ENCODE measurements at regions of chr2 and their contacts with region 1.

Region 1: GRCh38 chr2:20015472-20016083 is 3.1 kb upstream of the MATN3 start:
- DNase-seq: peak in 1 of 7 donors; percentile 25
- H3K4me3 ChIP-seq: no peak overlapping the region
- H3K27ac ChIP-seq: no peak overlapping the region
- H3K4me1 ChIP-seq: peaks cover 0 to 12% of the 10 kb centered on the region in 2 donors
- H3K27me3 ChIP-seq: no peaks in the 10 kb centered on the region
- CTCF ChIP-seq: peak; percentile 54 to 81 (median 67)
- POLR2A ChIP-seq: no peak

Region 2: GRCh38 chr2:19272039-19272438 is 743.5 kb before region 1 on chr2:
- intact Hi-C with region 1: no loop called
- DNase-seq: no peak
- H3K4me3 ChIP-seq: no peak overlapping the region
- H3K27ac ChIP-seq: no peak overlapping the region
- H3K4me1 ChIP-seq: no peaks in the 10 kb centered on the region
- H3K27me3 ChIP-seq: no peaks in the 10 kb centered on the region
- CTCF ChIP-seq: no peak
- POLR2A ChIP-seq: no peak

Region 3: GRCh38 chr2:20051532-20052228 is 36.1 kb after region 1 on chr2 and contains the start of gene LAPTM4A:
- intact Hi-C with region 1: loop called in 1 of 2 experiments (anchors 5 kb)
- DNase-seq: peak; percentile 98 to 100 (median 99)
- H3K4me3 ChIP-seq: peak within 1 kb of the TSS; percentile 43 to 92 (median 92)
- H3K27ac ChIP-seq: peak within 1 kb of the TSS; percentile 97 to 99 (median 98)
- H3K4me1 ChIP-seq: peaks cover 17 to 31% of the 10 kb centered on the region in 2 donors
- H3K27me3 ChIP-seq: no peaks in the 10 kb centered on the region
- CTCF ChIP-seq: peak in 5 of 6 experiments; percentile 21 to 61 (median 44)
- POLR2A ChIP-seq: peak; percentile 73 to 91
- total RNA-seq, gene LAPTM4A: 196 to 356 (median 238) TPM

Region 4: DNA sequence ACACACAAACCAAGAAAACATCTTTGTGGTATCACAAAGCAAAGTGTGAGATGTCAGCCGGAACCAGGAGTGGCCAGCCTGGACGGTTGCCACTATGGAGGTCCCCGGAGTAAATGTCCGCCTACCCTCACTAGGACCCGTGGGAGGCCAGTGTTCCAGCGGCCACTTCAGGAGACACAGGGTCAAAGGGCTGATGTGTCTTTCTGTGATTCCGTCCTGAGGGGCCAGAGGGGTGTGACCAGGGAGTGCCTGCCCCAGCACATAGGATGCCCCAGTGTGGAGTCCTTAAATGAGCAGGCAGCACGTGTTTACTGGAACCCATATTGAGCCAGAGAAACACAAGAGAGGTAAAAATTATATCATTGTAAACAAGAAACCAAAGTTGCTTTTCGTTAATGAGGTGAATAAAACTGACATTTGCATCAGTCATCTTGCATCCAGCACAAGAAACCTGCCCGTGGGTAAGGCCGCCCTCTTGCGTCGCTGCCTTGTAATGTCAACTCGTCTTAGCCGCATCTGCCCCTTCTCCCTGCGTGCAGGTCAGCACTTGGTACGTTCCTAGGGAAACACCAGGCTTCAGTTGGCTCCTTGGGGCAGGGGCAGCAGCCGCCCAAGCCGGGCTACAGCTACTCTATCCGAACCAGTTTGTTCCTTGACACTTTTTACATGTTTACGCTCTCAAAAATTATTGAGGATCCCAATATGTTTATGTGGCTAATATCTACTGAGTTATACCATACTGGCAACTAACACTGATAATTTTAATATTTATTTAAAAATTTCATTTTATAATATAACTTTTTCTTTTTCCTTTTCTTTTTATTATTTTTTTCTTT is 82.5 kb after region 1 on chr2:
- intact Hi-C with region 1: loop called (anchors 2 to 5 kb)
- DNase-seq: peak; percentile 75 to 94 (median 84)
- H3K4me3 ChIP-seq: no peak overlapping the region
- H3K27ac ChIP-seq: no peak overlapping the region
- H3K4me1 ChIP-seq: no peaks in the 10 kb centered on the region
- H3K27me3 ChIP-seq: no peaks in the 10 kb centered on the region
- CTCF ChIP-seq: peak; percentile 70 to 94 (median 92)
- POLR2A ChIP-seq: no peak

Measured in adrenal gland (tissue), 19 donors.